PC-9 (cell line): ENCODE measurements at regions of chr5 and their contacts with region 1.

Region 1: DNA sequence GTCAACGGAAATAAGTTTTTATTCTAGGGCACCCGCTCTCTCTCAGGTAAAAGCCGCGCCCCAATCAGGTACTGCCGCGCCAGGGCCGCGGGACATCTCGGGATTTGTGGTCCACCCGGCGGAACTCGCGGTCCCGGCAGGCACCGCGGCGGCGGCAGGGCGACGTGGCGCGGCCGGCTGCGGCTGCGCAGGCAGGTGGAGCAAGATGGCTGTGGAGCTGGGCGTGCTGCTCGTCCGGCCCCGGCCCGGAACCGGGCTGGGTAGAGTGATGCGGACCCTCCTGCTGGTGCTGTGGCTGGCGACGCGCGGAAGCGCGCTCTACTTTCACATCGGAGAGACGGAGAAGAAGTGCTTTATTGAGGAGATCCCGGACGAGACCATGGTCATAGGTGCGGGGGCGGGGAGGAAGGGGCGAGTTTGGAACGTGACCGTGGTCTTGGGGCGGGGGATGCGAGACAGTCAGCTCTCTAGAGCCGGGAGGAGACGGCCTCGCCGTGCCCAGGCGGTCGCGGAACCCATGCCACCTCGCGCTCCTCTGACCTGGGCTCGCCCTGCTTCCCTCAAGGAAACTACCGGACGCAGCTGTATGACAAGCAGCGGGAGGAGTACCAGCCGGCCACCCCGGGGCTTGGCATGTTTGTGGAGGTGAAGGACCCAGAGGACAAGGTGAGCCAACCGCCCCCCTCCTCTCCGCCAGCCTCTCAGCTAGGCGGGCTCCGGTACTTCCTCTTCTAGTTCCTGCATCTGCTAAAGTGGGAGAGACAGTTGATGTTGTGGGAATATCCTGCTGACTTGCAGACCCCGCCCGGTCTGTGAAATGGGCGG is at the start of gene TMED9:
- DNase-seq: peak; percentile 74 to 91
- H3K4me3 ChIP-seq: peak within 1 kb of the TSS; percentile 91
- H3K27ac ChIP-seq: peak within 1 kb of the TSS; percentile 42
- H3K4me1 ChIP-seq: peaks cover 7% of the 10 kb centered on the region; the same call in 1 of the 2 replicates
- H3K27me3 ChIP-seq: peaks cover 34% of the 10 kb centered on the region
- CTCF ChIP-seq: no peak
- total RNA-seq, gene TMED9: 168 and 173 TPM in 2 replicates

Region 2: DNA sequence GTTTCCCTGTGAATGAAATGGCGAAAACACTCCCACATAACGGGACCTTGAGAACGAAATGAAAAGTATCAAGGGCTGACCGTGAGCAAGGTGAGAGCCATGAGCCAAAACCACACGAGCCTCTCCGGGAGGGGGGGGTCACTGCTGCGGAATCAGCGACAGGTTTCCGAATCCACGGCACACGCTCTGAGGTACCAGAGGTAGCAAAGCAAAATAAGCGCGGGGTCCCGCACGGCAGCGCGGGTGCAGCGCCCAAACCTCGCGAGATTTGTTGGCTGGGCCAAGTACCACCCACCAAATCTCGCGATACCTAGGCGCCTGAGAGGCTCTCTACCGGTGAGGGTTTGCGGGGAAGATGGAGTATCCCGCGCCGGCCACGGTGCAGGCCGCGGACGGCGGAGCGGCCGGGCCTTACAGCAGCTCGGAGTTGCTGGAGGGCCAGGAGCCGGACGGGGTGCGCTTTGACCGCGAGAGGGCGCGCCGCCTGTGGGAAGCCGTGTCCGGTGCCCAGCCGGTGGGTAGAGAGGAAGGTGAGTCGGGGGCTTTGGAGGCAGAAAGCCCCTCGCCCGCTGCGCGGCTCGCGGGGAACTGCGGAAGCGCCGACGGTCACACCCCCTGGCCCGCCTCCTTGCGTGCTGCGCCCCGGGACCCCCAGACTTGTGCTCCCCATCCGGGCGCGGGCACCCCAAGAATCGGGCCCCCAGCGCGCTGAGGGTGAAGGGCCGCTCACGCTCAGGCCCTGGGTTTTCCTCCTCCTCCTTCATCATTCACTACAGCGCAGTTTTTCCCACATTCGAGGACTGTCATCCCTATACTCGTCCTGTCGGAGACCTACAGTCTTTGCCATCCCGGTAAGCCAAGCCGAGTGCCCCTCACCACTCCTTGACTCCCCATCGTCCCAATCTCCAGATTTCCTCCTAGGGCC is 569.6 kb before region 1 on chr5 and contains the start of gene ZNF346:
- CTCF ChIA-PET with region 1: interaction called, 11 read pairs
- POLR2A ChIA-PET with region 1: no interaction called
- intact Hi-C with region 1: no loop called
- DNase-seq: peak; percentile 82 to 89
- H3K4me3 ChIP-seq: peak within 1 kb of the TSS; percentile 98
- H3K27ac ChIP-seq: peak within 1 kb of the TSS; percentile 39
- H3K4me1 ChIP-seq: peaks cover 13% of the 10 kb centered on the region
- H3K27me3 ChIP-seq: no peaks in the 10 kb centered on the region
- CTCF ChIP-seq: peak; percentile 59
- total RNA-seq, gene ZNF346: 23.8 and 26.0 TPM in 2 replicates

Region 3: GRCh38 chr5:177497292-177498033 is 94.8 kb before region 1 on chr5 and contains the start of gene PDLIM7:
- CTCF ChIA-PET with region 1: no interaction called
- POLR2A ChIA-PET with region 1: no interaction called
- intact Hi-C with region 1: no loop called
- DNase-seq: peak; percentile 88 to 99
- H3K4me3 ChIP-seq: peak within 1 kb of the TSS; percentile 85
- H3K27ac ChIP-seq: peak within 1 kb of the TSS; percentile 65
- H3K4me1 ChIP-seq: peaks cover 41% of the 10 kb centered on the region
- H3K27me3 ChIP-seq: no peaks in the 10 kb centered on the region
- CTCF ChIP-seq: no peak
- total RNA-seq, gene PDLIM7: 167 and 202 TPM in 2 replicates

Region 4: GRCh38 chr5:177516604-177517568 is 75.3 kb before region 1 on chr5 and contains the start of gene DDX41:
- CTCF ChIA-PET with region 1: no interaction called
- POLR2A ChIA-PET with region 1: no interaction called
- intact Hi-C with region 1: loop called (anchors 2 kb)
- DNase-seq: peak; percentile 96 to 98
- H3K4me3 ChIP-seq: peak within 1 kb of the TSS; percentile 93
- H3K27ac ChIP-seq: peak within 1 kb of the TSS; percentile 18
- H3K4me1 ChIP-seq: peaks cover 18% of the 10 kb centered on the region
- H3K27me3 ChIP-seq: no peaks in the 10 kb centered on the region
- CTCF ChIP-seq: no peak
- total RNA-seq, gene DDX41: 90.8 and 93.1 TPM in 2 replicates

Region 5: GRCh38 chr5:177554474-177555111 is 37.6 kb before region 1 on chr5 and contains the start of gene FAM193B:
- CTCF ChIA-PET with region 1: no interaction called
- POLR2A ChIA-PET with region 1: no interaction called
- intact Hi-C with region 1: loop called (anchors 5 kb)
- DNase-seq: peak; percentile 76 to 98
- H3K4me3 ChIP-seq: peak within 1 kb of the TSS; percentile 98
- H3K27ac ChIP-seq: no peak within 1 kb of the TSS
- H3K4me1 ChIP-seq: peaks cover 22% of the 10 kb centered on the region
- H3K27me3 ChIP-seq: no peaks in the 10 kb centered on the region
- CTCF ChIP-seq: no peak
- total RNA-seq, gene FAM193B: 70.4 and 102 TPM in 2 replicates

Region 6: DNA sequence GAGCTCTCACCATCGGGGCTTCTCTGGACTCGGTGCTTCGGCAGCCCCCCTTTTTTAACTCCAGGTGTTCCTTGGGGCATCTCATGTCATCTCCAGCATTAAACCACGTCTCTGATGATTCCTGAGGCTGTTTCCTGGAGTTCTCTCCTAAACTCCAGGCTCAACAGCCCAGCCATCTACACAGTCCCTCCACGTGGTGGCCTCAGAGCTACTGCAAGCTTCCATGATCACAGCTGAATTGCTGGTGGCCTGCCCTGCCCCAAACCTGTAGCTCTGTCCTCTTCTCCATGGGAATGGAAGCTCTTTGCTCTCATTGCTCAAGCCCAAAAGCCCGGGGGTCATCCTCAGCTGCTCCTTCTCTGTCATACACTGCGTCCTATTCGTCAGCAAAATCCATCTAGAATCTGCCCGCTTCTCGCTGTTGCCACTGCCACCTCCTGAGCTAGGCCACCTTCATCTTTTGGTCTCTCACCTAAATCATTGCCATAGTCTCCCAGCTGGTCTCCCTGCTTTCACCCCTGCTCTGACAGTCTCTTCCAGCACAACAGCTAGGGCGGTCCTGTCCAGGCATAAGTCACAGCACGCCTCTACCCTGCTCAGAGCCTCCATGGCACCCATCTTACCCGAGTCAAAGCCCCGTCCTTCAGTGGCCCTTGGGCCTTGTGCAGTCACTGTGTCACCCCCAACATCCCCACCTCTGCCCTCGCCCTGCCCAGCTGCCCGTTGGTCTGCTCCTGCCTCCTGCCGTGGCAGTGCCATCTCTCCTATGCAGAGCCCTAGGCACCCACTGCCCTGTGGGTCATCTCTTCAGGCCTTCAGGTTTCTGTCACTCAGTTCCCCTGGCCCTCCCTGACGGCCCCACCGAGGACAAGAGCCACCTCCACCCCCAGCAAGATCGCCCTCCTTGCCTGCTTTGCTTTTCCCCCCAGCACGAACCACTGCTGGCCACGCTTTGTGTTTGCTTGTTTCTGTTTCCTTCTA is 14.1 kb after region 1 on chr5:
- CTCF ChIA-PET with region 1: interaction called, 16 read pairs
- POLR2A ChIA-PET with region 1: no interaction called
- intact Hi-C with region 1: no loop called
- DNase-seq: no peak
- H3K4me3 ChIP-seq: no peak overlapping the region
- H3K27ac ChIP-seq: no peak overlapping the region
- H3K4me1 ChIP-seq: 0 out of 2 replicates have a peak, but pooled peaks cover under 1% of the 10 kb centered on the region
- H3K27me3 ChIP-seq: no peaks in the 10 kb centered on the region
- CTCF ChIP-seq: no peak